ENCODE measurements at regions of chr4 and their contacts with region 1.

Region 1: GRCh38 chr4:120049732-120050494 is 16.7 kb downstream of the MAD2L1 start:
- DNase-seq: peak; percentile 84

Region 2: DNA sequence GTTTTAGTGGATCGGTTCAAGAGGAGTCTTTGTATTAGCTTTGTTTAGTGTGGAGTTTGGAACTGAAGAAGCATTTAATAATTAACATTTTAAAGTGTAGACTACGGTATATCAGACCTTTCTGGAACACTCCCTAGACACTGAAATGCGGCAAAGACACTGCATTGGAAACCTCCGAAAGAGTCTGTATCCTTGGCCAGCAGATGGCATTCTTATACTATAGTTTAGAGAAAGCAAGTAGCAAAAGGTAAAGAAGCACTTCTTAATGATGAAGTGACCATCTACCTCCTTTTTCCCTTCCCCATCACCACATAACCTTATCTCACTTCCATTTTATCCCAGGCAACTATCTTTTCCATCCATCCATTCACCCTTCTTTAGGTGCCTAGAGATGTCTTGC is 735.6 kb before region 1 on chr4:
- intact Hi-C with region 1: loop called in 1 of 2 experiments (anchors 10 kb)
- DNase-seq: no peak

Region 3: GRCh38 chr4:119536572-119537528 is 513.1 kb before region 1 on chr4:
- intact Hi-C with region 1: loop called in 1 of 2 experiments (anchors 10 kb)
- DNase-seq: no peak

Region 4: DNA sequence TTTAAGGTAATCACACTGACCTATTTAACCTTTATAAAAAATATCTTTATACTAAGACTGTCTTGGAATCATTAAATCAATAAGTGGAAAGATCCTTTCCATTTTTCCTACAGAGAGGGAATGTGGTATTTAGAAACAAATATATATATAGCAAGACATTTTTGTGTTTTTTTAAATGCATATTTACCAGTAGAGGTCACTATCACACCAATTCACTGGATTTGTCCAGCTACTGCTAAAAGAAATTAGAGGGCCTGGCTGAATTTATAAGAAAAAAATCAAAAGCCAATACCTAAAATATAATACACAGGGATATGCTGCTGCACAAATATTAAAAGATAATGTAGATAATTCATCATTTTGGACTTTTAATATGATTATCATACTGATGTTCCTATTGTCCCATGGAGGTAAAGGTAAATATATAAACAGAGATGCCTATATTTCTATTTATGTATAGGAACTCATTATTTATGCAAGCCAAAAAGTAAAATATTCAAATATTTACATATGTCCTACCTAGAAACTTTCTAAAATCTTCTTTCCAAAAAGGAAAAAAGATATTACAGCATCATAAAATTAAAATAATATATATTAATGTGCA is 490.8 kb before region 1 on chr4:
- intact Hi-C with region 1: loop called in 1 of 2 experiments (anchors 10 kb)
- DNase-seq: no peak

Region 5: GRCh38 chr4:119628308-119629141 is 421.4 kb before region 1 on chr4 and contains the start of gene PDE5A:
- intact Hi-C with region 1: loop called (anchors 2 to 5 kb)
- DNase-seq: peak; percentile 94
- total RNA-seq, gene PDE5A: 80.4 to 87.1 TPM

Region 6: GRCh38 chr4:120018786-120019185 is 31.1 kb before region 1 on chr4:
- intact Hi-C with region 1: no loop called
- DNase-seq: no peak

Measured in posterior vena cava (tissue), 2 donors.